ENCODE measurements at regions of chr22 and their contacts with region 1.

Region 1: GRCh38 chr22:29716814-29717545 is 2.8 kb upstream of the CABP7 start:
- DNase-seq: peak; percentile 59
- H3K4me3 ChIP-seq: no peak overlapping the region
- H3K27ac ChIP-seq: no peak overlapping the region
- H3K4me1 ChIP-seq: peaks cover 6% of the 10 kb centered on the region
- H3K27me3 ChIP-seq: peaks cover 12% of the 10 kb centered on the region
- CTCF ChIP-seq: no peak

Region 2: DNA sequence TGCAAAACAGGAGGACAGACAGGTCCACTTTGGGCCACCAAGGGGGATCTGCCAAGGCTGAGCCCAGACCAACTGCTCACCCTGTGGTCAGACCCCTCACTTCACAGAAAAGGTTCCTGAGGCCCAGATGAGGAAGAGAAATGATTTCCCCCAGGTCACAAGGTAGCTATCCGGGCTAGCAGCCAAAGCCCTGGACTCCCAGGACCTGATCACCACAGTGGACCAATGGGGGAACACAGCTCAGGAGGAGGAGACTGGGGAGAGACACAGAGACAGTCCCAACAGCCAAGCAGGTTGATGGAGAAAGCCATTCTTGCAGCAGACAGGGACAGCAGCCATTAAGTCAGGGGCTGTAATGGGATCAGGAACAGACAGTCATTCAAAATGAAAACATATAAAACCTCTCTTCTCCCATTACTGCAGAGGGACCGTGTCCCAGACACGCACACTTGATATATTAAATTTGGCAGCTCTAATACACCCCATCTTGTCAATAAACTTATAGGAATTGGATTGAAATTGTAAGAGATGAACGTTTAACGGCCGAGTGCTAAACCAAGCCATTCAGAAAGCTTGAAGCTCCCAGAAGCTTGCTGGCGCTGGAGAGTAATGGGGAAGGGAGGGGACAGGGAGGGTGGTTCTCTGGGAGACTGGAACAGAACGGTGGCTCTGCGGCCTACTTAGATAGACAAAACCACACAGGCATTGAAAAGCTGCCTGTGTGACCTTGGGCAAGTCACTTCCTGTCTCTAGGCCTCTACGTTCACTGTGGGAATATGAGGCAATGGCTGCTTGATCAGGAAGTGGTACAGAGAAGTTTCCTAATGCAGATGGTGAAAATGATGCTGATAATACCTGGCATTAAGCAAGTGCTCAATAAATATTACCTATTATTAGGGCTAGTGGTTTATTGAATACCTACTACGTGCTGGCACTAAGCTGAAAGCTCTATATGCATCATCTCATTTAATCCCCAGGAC is 33.9 kb after region 1 on chr22:
- CTCF ChIA-PET with region 1: no interaction called
- dilution Hi-C with region 1: no loop called
- in situ Hi-C with region 1: no loop called
- intact Hi-C with region 1: no loop called
- DNase-seq: peak; percentile 29
- H3K4me3 ChIP-seq: no peak overlapping the region
- H3K27ac ChIP-seq: no peak overlapping the region
- H3K4me1 ChIP-seq: no peaks in the 10 kb centered on the region
- H3K27me3 ChIP-seq: no peaks in the 10 kb centered on the region
- CTCF ChIP-seq: no peak

Region 3: DNA sequence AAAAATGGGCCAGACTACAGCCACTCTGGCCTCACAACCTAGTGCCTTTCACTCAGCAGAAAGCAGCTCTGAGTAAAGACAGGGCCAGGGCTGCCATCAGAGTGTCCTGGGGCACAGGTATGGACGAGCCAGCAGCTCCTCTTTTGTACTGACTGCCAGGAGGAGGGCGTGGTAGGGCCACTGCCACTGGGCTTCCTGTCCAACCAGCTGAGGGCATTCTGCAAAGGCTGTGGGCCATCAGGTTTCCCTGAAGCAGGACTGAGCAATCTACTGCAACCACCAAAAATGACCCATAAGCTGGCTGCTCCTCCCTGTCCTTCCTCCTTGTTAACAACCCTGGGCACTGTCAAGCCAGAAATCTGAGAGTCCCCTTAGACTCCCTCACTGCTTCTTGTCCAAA is 88.0 kb after region 1 on chr22:
- CTCF ChIA-PET with region 1: no interaction called
- dilution Hi-C with region 1: no loop called
- in situ Hi-C with region 1: no loop called
- intact Hi-C with region 1: no loop called
- DNase-seq: no peak
- H3K4me3 ChIP-seq: no peak overlapping the region
- H3K27ac ChIP-seq: no peak overlapping the region
- H3K4me1 ChIP-seq: peaks cover under 1% of the 10 kb centered on the region
- H3K27me3 ChIP-seq: no peaks in the 10 kb centered on the region
- CTCF ChIP-seq: no peak

Region 4: DNA sequence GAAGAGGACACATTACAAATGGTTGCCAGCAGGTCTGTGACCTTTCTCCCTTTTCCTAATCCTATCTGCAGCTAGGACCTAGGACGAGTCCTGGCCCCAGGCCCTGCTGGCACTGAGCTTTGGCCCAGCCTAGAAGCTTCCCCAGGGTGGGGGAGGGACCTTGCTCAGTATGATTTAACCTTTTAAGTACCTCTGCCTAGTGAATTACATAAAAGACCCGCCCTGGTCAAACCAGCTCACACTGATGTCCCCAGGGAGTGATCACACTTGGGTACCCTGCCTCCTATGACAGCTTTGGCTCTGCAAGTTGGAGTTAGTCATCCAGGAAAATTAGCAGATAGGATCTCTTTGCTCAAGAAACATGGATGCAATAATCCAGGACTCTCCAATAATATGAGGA is 99.1 kb after region 1 on chr22:
- CTCF ChIA-PET with region 1: no interaction called
- dilution Hi-C with region 1: loop called (anchors 5 kb)
- in situ Hi-C with region 1: no loop called
- intact Hi-C with region 1: no loop called
- DNase-seq: no peak
- H3K4me3 ChIP-seq: no peak overlapping the region
- H3K27ac ChIP-seq: no peak overlapping the region
- H3K4me1 ChIP-seq: peaks cover 25% of the 10 kb centered on the region
- H3K27me3 ChIP-seq: no peaks in the 10 kb centered on the region
- CTCF ChIP-seq: no peak

Measured in mammary epithelial cell (primary cell).